Left colon (tissue), 2 donors: ENCODE measurements at regions of chr13 and their contacts with region 1.

Region 1: DNA sequence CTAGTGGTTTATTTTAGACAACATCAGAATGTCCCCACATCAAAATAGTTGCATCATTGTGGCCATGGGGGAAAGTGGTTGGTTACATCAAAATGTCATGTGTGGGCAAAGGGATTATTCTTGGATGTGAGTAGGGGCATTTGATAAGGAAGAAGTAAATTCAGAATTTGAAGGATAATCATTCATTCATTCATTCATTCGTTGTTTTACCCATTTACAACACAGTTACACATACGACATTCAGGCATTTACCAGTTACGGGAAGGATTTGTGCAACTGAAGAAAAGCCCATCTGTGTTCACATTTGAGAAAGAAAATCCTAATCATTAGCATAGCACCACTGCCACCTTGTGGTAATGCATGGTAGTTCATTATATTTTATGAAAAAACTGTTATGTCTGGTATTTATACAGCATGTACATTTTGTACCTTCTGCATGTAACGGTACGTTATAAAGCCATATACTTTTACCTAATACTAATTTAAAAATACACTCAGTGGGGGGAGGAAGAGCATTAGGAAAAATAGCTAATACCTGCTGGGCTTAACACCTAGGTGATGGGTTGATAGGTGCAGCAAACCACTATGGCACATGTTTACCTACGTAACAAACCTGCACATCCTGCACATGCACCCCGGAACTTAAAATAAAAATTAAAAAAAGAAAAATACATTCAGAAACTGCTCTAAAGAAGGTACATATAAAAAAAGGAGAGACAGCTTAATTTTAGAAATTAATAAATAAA is 62.1 kb downstream of the DGKH start:
- DNase-seq: no peak
- ATAC-seq: peak; percentile 67

Region 2: DNA sequence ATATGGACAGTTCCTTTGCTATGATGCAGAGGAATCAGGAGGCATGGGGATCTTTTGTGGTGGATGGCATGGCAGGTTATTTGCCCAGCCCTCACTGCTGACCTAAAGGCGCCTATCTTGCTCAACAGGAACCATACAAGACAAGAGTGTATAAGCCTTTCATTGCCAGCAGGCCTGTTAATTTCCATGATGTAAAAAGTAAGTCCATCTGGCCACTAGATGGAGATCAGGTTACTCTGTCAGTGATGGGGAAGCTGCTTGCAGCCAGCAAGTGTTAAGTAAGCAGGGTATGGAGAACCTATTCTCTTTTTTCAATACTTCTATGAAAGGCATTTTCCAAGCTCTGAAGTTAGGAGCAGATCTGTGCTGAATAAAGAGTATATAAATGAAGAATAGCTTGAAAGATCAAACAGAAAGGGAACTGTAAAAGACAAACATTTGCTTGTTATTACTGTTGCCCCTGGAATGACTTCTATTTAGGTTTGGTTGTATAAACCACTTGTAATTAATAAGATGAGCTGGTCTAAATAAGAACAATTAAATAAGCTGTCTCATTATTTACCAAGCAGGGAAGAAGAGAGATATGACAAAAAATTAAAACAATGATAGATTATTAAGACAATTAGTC is 442.3 kb before region 1 on chr13:
- intact Hi-C with region 1: loop called (anchors 5 to 10 kb)
- DNase-seq: peak in 1 of 2 donors; percentile 16
- ATAC-seq: peak; percentile 98

Region 3: GRCh38 chr13:41905600-41906254 is 204.9 kb before region 1 on chr13:
- intact Hi-C with region 1: loop called in 1 of 2 experiments (anchors 10 kb)
- DNase-seq: no peak
- ATAC-seq: peak; percentile 97

Region 4: DNA sequence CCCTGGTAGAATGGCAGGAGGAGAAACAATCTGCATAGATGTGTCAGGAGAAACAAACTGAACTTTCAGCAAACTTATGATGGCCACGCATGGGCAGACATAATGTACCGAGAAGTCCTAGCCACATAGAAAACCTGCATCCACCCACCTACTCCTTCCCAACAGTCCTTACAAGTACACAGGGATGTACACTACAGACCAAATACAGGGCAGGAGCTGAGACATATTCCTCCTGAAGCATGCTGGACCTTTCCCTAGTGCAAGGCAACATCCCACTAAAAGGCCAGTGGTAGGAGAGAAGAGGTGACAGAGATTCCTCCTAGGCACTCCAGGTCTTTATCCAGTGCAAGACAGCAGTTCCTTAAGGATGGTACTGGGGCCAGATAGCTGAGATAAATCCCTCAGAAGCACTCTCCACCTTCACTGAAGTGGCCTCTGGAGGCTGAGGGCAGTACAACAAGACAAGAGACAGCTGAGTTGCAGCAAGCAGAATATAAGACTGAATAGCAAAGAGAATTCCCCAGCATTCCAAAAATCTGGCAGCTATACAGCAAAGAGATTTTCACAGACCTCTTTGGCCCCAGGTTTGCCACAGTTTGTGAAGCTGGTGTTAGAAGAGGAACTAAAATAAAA is 168.0 kb before region 1 on chr13:
- intact Hi-C with region 1: no loop called
- DNase-seq: no peak
- ATAC-seq: peak; percentile 52